ENCODE measurements at regions of chr1 and their contacts with region 1.

Region 1: DNA sequence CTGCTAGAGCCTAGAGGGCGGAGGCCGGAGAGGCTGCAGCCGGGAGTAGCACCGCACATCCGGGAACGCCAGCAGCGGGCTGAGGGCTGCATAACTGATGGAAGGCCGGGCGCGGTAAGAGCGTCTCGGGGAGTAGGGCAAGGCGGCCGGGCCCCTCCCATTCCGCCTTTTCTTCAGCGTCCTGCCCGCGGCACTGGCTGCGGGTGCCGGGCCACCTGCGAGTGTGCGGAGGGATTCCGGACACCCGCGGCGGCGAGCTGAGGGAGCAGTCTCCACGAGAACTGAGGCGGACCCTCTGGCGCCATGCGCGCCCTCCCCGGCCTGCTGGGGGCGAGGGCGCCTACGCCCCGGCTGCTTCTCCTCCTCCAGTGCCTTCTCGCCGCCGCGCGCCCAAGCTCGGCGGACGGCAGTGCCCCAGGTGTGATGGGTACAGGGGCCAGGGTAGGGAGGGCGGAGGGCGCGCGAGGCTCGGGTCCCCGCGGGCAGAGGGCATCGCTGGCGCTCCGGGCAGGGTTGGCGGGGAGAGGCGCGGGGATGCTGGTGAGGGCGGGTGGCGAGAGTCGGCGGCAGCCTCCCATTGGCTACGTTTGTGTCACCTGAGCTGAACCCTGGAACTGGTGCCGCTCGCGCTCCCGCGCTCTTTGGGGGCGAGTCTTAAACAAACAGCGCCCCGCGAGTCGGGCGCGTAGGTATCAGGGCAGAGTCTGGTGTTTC is 334.4 kb downstream of the SRGAP2C start:
- DNase-seq: peak; percentile 91
- H3K4me3 Mint-ChIP-seq: peak overlapping the region; percentile 89
- H3K27ac Mint-ChIP-seq: peak overlapping the region; percentile 88
- H3K4me1 Mint-ChIP-seq: peaks cover 42% of the 10 kb centered on the region
- H3K27me3 Mint-ChIP-seq: no peaks in the 10 kb centered on the region

Region 2: GRCh38 chr1:121458291-121459048 is 60.7 kb before region 1 on chr1:
- CTCF ChIA-PET with region 1: interaction called, 4 read pairs
- intact Hi-C with region 1: loop called (anchors 2 kb)
- DNase-seq: no peak
- H3K4me3 Mint-ChIP-seq: no peak overlapping the region
- H3K27ac Mint-ChIP-seq: no peak overlapping the region
- H3K4me1 Mint-ChIP-seq: peaks cover 14% of the 10 kb centered on the region
- H3K27me3 Mint-ChIP-seq: peaks cover 2% of the 10 kb centered on the region

Region 3: DNA sequence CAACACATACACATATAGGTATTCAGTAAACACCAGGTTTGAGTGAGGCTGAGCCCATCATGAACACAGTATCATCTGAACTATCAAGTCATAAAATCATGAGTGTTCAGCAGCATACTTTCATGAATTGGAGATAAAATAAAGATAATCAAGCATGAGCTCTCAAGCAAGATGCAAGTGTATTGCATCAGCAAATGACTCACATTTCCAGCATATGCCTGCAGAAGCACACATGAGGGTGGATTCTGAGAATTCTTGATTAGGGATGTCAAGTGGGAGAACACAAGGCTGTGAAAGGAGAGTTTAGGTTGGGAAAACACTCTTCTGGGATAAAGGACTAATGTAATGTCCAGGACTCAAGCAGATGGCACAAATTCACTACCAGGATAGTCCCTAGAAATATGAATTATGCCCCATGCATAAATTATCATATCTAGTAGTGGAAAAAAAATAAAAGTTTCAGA is 35.2 kb before region 1 on chr1:
- CTCF ChIA-PET with region 1: no interaction called
- intact Hi-C with region 1: loop called (anchors 1 kb)
- DNase-seq: peak; percentile 43
- H3K4me3 Mint-ChIP-seq: no peak overlapping the region
- H3K27ac Mint-ChIP-seq: peak overlapping the region; percentile 77
- H3K4me1 Mint-ChIP-seq: peaks cover 23% of the 10 kb centered on the region
- H3K27me3 Mint-ChIP-seq: no peaks in the 10 kb centered on the region

Region 4: DNA sequence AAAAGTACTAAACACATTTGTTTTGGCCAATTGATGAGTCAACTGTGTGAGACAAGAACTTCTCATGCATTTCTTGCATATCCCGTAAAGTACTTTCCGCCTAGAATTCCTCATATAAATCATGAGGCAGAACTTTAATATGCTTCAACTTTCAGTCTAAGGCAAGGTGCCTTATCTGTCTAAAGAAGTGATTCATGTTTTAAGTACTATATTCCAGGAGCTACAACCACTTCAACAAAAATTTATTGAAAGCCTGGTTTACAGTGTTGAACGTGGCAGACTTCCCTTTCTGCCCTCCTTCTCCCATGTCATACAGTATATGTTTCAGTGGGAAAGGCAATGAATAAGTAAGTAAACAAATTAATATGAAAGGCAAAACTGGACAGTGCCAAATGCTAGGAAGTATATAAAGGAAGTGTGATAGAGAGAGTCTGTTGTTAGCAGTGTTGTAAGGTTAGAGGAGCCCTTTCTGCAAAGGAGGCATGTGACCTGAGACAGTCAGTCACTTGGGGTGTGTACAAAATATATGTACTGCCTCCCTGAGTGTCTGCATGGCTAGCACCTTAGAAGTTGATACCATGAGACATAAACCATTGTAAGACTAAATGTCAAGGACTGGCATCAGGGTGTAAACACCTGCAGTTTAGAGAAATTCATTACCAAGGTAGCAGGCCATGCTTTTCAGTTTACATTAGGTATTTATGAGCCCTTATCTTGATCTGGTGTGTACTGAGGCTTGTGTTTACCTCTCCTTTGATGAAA is 27.8 kb after region 1 on chr1:
- CTCF ChIA-PET with region 1: no interaction called
- intact Hi-C with region 1: loop called (anchors 1 kb)
- DNase-seq: no peak
- H3K4me3 Mint-ChIP-seq: no peak overlapping the region
- H3K27ac Mint-ChIP-seq: no peak overlapping the region
- H3K4me1 Mint-ChIP-seq: peaks cover 17% of the 10 kb centered on the region
- H3K27me3 Mint-ChIP-seq: no peaks in the 10 kb centered on the region

Region 5: GRCh38 chr1:121558514-121558913 is 39.3 kb after region 1 on chr1:
- CTCF ChIA-PET with region 1: no interaction called
- intact Hi-C with region 1: loop called (anchors 2 kb)
- DNase-seq: no peak
- H3K4me3 Mint-ChIP-seq: no peak overlapping the region
- H3K27ac Mint-ChIP-seq: no peak overlapping the region
- H3K4me1 Mint-ChIP-seq: peaks cover 18% of the 10 kb centered on the region
- H3K27me3 Mint-ChIP-seq: no peaks in the 10 kb centered on the region

Region 6: DNA sequence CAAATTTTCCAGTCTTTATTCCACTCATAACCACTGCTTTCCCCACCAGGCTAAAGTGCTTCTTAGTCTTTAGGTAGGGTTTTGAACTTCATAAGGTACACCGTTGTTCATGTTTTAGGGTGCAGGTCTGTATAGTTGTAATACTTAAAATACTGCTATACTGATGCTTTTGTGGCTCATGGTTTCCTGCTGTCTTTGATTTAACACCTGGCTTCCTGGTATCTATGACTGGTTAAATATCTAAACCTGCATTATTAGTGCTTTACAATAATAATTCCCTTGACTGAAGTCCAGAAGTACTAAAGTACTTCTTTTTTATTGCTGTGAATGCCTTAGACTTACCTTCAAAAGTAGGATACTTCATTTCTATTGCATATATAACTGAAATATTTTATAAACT is 50.2 kb after region 1 on chr1:
- CTCF ChIA-PET with region 1: no interaction called
- intact Hi-C with region 1: loop called (anchors 2 kb)
- DNase-seq: no peak
- H3K4me3 Mint-ChIP-seq: no peak overlapping the region
- H3K27ac Mint-ChIP-seq: no peak overlapping the region
- H3K4me1 Mint-ChIP-seq: peaks cover 6% of the 10 kb centered on the region
- H3K27me3 Mint-ChIP-seq: no peaks in the 10 kb centered on the region